AG04450 (cell line): ENCODE measurements at regions of chr19 and their contacts with region 1.

Region 1: DNA sequence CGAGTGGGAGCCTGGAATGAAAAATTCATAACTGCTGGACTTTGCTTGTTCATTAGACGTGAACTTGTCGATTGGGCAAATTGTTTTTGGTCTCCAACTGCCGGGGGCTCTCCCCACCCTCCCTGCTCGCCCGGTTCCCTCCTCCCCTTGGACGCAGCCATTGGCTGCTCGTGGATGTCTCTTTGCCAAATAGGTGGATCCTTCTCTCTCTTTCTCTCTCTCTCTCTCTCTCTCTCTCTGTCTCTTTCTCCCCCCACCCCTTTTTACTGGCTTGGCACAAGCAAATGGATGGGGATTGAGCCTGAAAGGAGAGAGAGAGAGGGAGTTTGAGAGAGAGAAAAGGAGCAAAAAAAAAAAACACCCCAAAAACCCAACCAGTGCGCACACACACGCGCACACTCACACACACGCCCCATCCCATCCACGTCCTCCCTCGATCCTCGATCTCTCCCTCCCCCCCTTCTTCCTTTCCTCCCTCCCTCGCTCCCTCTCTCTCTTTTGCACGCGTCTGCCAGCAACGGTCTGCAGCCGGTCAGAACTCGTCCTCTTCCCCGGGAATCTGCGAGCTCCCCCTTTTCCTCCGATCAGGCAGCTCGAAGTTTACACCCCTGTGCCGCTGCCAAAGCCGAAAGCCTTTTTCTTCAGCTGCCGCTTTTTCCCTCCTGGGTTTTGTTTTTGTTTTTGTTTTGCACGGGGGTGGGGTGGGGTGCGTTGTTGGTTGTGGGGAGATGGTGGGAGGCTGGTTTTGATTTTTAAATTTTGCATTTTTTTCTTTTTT is 27.8 kb downstream of the NFIX start:
- DNase-seq: peak; percentile 92
- H3K4me3 ChIP-seq: peak overlapping the region; percentile 65
- H3K27ac ChIP-seq: peak overlapping the region; percentile 99
- H3K27me3 ChIP-seq: no peaks in the 10 kb centered on the region
- CTCF ChIP-seq: no peak

Region 2: DNA sequence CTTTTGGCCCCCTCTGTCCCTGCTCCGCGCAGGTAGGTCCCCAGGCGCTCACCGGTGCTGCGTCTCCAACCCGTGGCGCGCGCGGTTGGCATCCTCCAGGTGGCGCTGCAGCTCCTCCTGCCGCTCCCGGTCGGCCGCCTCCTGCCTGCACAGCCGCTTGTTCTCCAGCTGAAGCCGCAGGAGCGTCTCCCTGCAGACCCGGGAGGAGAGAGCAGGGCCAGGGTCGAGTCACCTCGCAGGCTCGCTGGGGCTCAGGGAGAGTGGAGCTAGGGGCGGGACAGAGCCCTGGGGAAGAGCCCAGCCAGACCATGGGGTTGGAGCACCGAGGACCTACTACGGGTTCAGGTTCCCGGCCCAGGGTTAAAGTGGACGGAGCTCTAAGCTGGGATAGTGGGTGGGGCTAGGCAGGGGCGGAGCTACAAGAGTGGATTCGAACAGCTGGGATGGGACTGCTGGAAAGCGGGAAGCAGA is 257.0 kb before region 1 on chr19:
- CTCF ChIA-PET with region 1: no interaction called
- POLR2A ChIA-PET with region 1: no interaction called
- DNase-seq: peak; percentile 45
- H3K4me3 ChIP-seq: peak overlapping the region; percentile 68
- H3K27ac ChIP-seq: no peak overlapping the region
- H3K27me3 ChIP-seq: no peaks in the 10 kb centered on the region
- CTCF ChIP-seq: peak; percentile 77

Region 3: GRCh38 chr19:13051267-13052165 is 28.5 kb after region 1 on chr19:
- CTCF ChIA-PET with region 1: interaction called, 4 read pairs
- POLR2A ChIA-PET with region 1: interaction called, 20 read pairs
- DNase-seq: no peak
- H3K4me3 ChIP-seq: no peak overlapping the region
- H3K27ac ChIP-seq: no peak overlapping the region
- H3K27me3 ChIP-seq: no peaks in the 10 kb centered on the region
- CTCF ChIP-seq: no peak